ENCODE measurements at regions of chr14 and their contacts with region 1.

Region 1: DNA sequence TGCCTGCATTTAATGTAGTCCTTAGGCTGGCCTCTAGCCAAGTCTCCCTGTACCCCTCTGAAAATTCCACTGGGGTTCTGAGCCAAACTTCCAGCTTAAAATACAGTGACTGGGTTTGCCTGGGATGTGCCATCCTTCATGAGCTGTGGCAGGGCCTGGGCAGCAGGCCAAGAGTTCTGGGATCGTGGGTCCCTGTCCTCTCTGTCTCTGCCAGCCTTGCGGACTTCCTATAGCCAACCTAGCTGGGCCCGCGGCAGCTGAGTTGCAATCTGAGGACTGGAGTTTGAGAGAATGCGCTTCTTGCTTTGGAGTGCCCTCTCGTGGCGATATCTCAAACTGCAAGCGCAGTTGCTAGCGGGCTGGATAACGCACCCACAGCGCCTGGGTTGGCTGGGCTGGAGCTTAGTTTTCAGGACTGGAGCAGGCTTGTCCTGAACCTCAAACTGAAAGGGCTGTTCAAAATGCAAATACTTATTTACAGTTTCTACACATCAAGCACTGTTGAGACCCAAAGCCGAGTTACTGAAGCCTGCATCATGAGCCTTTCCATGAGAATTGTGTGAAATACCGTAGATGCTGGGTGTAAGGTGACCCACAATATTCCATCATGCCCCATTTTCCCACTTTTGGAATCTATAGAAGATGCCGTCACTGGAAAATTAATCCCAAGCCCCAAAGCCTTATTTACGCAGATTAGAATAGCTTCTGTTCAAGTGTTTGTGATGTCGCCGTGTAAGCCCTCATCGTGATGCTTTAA is 7.3 kb upstream of the IFI27L2 start:
- DNase-seq: peak; percentile 81
- H3K4me3 ChIP-seq: no peak overlapping the region
- H3K27ac ChIP-seq: no peak overlapping the region
- H3K4me1 ChIP-seq: no peaks in the 10 kb centered on the region
- CTCF ChIP-seq: peak; percentile 96

Region 2: GRCh38 chr14:93939304-93940229 is 197.2 kb before region 1 on chr14:
- CTCF ChIA-PET with region 1: no interaction called
- POLR2A ChIA-PET with region 1: no interaction called
- intact Hi-C with region 1: loop called (anchors 10 kb)
- DNase-seq: peak; percentile 81
- H3K4me3 ChIP-seq: no peak overlapping the region
- H3K27ac ChIP-seq: no peak overlapping the region
- H3K4me1 ChIP-seq: peaks cover 6% of the 10 kb centered on the region
- CTCF ChIP-seq: peak; percentile 86

Region 3: GRCh38 chr14:94036313-94037050 is 100.3 kb before region 1 on chr14:
- CTCF ChIA-PET with region 1: interaction called, 11 read pairs
- POLR2A ChIA-PET with region 1: interaction called, 5 read pairs
- intact Hi-C with region 1: loop called (anchors 1 kb)
- DNase-seq: peak; percentile 79
- H3K4me3 ChIP-seq: no peak overlapping the region
- H3K27ac ChIP-seq: no peak overlapping the region
- H3K4me1 ChIP-seq: no peaks in the 10 kb centered on the region
- CTCF ChIP-seq: peak; percentile 90

Region 4: DNA sequence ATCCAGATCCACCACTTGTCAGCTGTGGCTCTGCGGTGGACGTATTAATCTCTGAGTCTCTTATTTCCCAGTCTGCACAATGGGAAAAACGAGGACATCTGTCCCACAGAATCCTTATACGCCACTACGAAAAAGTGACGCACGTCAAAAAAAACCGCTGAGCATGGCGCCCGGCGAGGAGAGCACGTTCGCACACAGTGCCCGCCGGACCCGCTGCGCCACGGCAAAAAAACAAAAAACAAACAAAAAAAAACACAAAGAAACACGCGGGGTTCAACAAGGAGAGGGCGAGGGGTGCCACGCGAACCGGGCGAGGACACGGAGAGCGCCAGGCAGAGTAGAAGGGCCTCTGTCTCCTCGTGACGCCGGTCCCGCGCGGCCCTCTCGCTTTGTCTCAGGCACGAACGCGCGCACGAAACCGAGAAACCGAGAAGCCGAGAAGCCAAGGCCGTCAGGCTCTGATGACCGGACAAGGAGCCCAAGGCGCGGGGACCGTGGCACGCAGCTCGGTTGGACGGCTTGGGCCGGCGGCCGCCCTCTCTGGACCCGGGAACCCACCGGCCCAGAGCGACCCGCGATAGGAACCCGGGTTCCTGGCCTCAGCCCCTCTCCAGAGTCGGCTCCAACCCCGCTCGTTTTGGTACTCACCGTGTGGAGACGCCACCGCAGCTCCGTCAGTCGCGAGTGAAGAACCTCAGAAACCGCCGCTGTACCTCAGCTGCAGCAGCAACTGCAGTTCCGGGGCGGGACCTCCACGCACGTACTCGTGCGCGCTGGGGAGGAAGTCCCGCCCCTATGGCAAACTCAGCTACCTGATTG is 56.1 kb before region 1 on chr14 and contains the start of gene DDX24:
- CTCF ChIA-PET with region 1: interaction called, 6 read pairs
- POLR2A ChIA-PET with region 1: interaction called, 5 read pairs
- intact Hi-C with region 1: loop called (anchors 2 kb)
- DNase-seq: peak; percentile 96
- H3K4me3 ChIP-seq: peak within 1 kb of the TSS; percentile 91
- H3K27ac ChIP-seq: peak within 1 kb of the TSS; percentile 50
- H3K4me1 ChIP-seq: peaks cover 38% of the 10 kb centered on the region
- CTCF ChIP-seq: no peak
- total RNA-seq, gene DDX24: 81.5 and 91.5 TPM in 2 replicates

Region 5: DNA sequence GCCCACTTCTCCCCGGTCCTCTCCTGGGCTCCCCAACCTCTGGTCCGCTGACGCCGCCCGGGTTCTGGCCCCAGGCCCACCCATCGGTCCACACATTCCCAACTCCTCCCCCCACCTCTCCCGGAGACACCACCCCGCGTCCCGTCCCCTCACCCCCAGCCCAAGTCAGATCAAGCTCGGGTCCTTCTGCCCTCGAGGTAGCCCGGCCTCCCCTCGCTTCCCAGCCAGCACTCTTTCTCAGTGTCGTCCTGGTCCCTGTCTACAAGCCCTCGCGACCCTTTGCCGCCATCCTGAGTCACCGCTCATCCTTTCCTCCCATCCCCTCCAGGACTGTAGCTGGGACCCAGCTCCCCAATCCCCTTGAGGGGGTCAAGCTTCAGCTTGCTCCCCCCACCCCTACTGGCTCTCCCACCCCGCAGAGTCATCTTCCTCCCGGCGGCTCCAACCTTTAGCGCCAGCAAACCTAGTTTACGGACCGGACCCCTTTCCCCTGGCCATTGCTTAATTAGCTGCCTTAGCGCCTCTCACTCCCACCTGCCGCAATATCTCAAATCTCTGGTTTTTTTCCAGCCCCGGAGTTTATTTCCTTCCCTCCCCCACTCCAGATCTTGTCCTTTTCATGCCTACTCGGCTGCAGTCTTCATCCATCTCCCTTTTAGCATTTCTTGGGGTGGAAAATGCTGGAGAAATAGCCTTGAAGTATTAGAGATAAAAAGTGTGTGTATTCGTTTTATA is 38.4 kb after region 1 on chr14:
- CTCF ChIA-PET with region 1: interaction called, 16 read pairs
- POLR2A ChIA-PET with region 1: interaction called, 6 read pairs
- intact Hi-C with region 1: loop called (anchors 1 kb)
- DNase-seq: no peak
- H3K4me3 ChIP-seq: no peak overlapping the region
- H3K27ac ChIP-seq: no peak overlapping the region
- H3K4me1 ChIP-seq: peaks cover 6% of the 10 kb centered on the region
- CTCF ChIP-seq: no peak

Region 6: GRCh38 chr14:94180655-94181271 is 44.0 kb after region 1 on chr14:
- CTCF ChIA-PET with region 1: interaction called, 4 read pairs
- POLR2A ChIA-PET with region 1: interaction called, 6 read pairs
- intact Hi-C with region 1: loop called (anchors 1 kb)
- DNase-seq: peak; percentile 76
- H3K4me3 ChIP-seq: peak overlapping the region; percentile 3
- H3K27ac ChIP-seq: no peak overlapping the region
- H3K4me1 ChIP-seq: no peaks in the 10 kb centered on the region
- CTCF ChIP-seq: peak; percentile 92

Region 7: GRCh38 chr14:94237046-94237445 is 100.3 kb after region 1 on chr14:
- CTCF ChIA-PET with region 1: no interaction called
- POLR2A ChIA-PET with region 1: no interaction called
- intact Hi-C with region 1: no loop called
- DNase-seq: no peak
- H3K4me3 ChIP-seq: no peak overlapping the region
- H3K27ac ChIP-seq: no peak overlapping the region
- H3K4me1 ChIP-seq: no peaks in the 10 kb centered on the region
- CTCF ChIP-seq: no peak